Heart right ventricle (tissue), 16 donors: ENCODE measurements at regions of chr6 and their contacts with region 1.

Region 1: GRCh38 chr6:116268589-116269293 is 11.0 kb downstream of the TSPYL1 start:
- DNase-seq: no peak
- ATAC-seq: peak in 5 of 8 donors; percentile 55 to 80 (median 68)
- H3K4me3 ChIP-seq: no peak overlapping the region
- H3K27ac ChIP-seq: no peak overlapping the region
- H3K4me1 ChIP-seq: peaks cover 0 to 20% (median 6%) of the 10 kb centered on the region in 9 donors
- H3K27me3 ChIP-seq: no peaks in the 10 kb centered on the region
- CTCF ChIP-seq: peak; percentile 39 to 87 (median 66)

Region 2: GRCh38 chr6:115485400-115485799 is 783.3 kb before region 1 on chr6:
- intact Hi-C with region 1: no loop called
- DNase-seq: no peak
- ATAC-seq: no peak
- H3K4me3 ChIP-seq: no peak overlapping the region
- H3K27ac ChIP-seq: no peak overlapping the region
- H3K4me1 ChIP-seq: no peaks in the 10 kb centered on the region
- H3K27me3 ChIP-seq: no peaks in the 10 kb centered on the region
- CTCF ChIP-seq: no peak

Region 3: DNA sequence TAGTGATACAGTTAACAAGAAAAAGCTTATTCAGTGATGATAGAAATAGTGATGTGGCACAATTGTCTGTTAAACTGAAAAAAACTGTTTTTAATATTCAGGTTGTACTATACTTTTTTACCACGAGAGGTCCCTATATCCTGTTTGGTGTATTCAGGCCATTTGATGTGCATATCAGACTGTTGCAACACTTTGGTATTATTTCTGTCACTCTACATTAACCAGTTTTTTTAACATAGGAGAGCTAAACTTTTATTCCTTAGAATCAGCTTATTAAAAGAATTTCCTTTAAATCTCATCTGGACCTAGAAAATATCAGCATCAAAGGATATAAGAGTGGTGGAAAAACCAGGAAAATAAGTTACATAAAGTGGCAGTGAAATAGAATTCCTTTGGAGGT is 51.7 kb before region 1 on chr6:
- intact Hi-C with region 1: loop called in 1 of 10 experiments (anchors 5 kb)
- DNase-seq: no peak
- ATAC-seq: peak in 4 of 8 donors; percentile 51 to 64 (median 54)
- H3K4me3 ChIP-seq: no peak overlapping the region
- H3K27ac ChIP-seq: no peak overlapping the region
- H3K4me1 ChIP-seq: peaks cover 0 to 27% (median 3%) of the 10 kb centered on the region in 9 donors
- H3K27me3 ChIP-seq: no peaks in the 10 kb centered on the region
- CTCF ChIP-seq: peak; percentile 27 to 69 (median 58)

Region 4: GRCh38 chr6:116561377-116562018 is 292.8 kb after region 1 on chr6:
- intact Hi-C with region 1: loop called in 5 of 10 experiments (anchors 5 to 10 kb)
- DNase-seq: peak; percentile 64 to 71
- ATAC-seq: peak in 7 of 8 donors; percentile 43 to 67 (median 65)
- H3K4me3 ChIP-seq: peak overlapping the region in 1 of 10 donors; percentile 4
- H3K27ac ChIP-seq: no peak overlapping the region
- H3K4me1 ChIP-seq: peaks cover 0 to 12% (median 8%) of the 10 kb centered on the region in 9 donors
- H3K27me3 ChIP-seq: peaks cover 0 to 3% (median 0%) of the 10 kb centered on the region in 7 donors
- CTCF ChIP-seq: peak; percentile 81 to 96 (median 95)